HepG2 (cell line): ENCODE measurements at regions of chr10 and their contacts with region 1.

Region 1: GRCh38 chr10:115355162-115355760 is 262.1 kb downstream of the ATRNL1 start:
- DNase-seq: peak; percentile 63
- ATAC-seq: peak; percentile 87
- H3K4me3 ChIP-seq: no peak overlapping the region
- H3K27ac ChIP-seq: no peak overlapping the region
- H3K4me1 ChIP-seq: no peaks in the 10 kb centered on the region
- H3K27me3 ChIP-seq: no peaks in the 10 kb centered on the region
- CTCF ChIP-seq: peak; percentile 77
- EP300 ChIP-seq: no peak
- POLR2A ChIP-seq: no peak
- RAD21 ChIP-seq: no peak

Region 2: GRCh38 chr10:115321360-115321759 is 33.9 kb before region 1 on chr10:
- CTCF ChIA-PET with region 1: no interaction called
- POLR2A ChIA-PET with region 1: no interaction called
- in situ Hi-C with region 1: no loop called
- intact Hi-C with region 1: no loop called
- DNase-seq: no peak
- ATAC-seq: no peak
- H3K4me3 ChIP-seq: no peak overlapping the region
- H3K27ac ChIP-seq: no peak overlapping the region
- H3K4me1 ChIP-seq: no peaks in the 10 kb centered on the region
- H3K27me3 ChIP-seq: no peaks in the 10 kb centered on the region
- CTCF ChIP-seq: no peak
- EP300 ChIP-seq: no peak
- POLR2A ChIP-seq: no peak
- RAD21 ChIP-seq: no peak

Region 3: DNA sequence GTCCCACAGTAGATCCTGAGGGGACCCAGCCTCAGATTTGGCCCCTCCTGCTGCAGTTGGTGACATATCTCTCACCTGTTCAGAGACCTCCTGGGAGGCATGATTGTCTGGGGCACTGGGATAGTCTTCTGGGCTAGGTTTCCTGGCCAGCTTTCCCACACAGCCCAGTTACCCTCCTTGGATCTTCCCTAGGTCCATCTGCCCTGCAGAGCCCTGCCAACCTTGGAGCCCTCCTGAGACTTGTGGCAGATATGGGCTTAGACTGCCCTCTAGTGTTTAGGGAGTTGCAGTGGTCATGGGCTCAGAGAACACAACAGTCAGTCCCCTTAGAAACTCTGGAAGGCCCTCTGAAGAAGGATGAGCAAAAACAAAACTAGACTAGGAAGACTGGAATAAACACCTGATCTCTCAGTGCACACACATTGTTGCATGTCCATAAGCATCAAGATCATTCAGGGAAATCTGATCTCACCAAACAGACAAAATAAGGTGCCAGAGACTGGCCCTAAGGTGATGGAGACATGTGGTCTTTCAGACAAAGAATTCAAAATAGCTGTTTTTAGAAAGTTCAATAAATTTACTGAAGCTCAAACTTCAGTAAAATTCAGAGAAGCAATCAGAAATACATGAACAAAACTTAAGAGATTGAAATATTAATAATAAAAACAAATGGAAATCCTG is 62.5 kb after region 1 on chr10:
- CTCF ChIA-PET with region 1: interaction called, 23 read pairs
- POLR2A ChIA-PET with region 1: no interaction called
- in situ Hi-C with region 1: no loop called
- intact Hi-C with region 1: loop called (anchors 1 kb)
- DNase-seq: peak; percentile 60
- ATAC-seq: peak; percentile 99
- H3K4me3 ChIP-seq: no peak overlapping the region
- H3K27ac ChIP-seq: no peak overlapping the region
- H3K4me1 ChIP-seq: no peaks in the 10 kb centered on the region
- H3K27me3 ChIP-seq: no peaks in the 10 kb centered on the region
- CTCF ChIP-seq: peak; percentile 82
- EP300 ChIP-seq: no peak
- POLR2A ChIP-seq: no peak
- RAD21 ChIP-seq: no peak

Region 4: GRCh38 chr10:115572706-115573455 is 217.6 kb after region 1 on chr10:
- CTCF ChIA-PET with region 1: interaction called, 3 read pairs
- POLR2A ChIA-PET with region 1: no interaction called
- in situ Hi-C with region 1: no loop called
- intact Hi-C with region 1: loop called (anchors 2 kb)
- DNase-seq: no peak
- ATAC-seq: peak; percentile 73
- H3K4me3 ChIP-seq: no peak overlapping the region
- H3K27ac ChIP-seq: no peak overlapping the region
- H3K4me1 ChIP-seq: no peaks in the 10 kb centered on the region
- H3K27me3 ChIP-seq: no peaks in the 10 kb centered on the region
- CTCF ChIP-seq: peak; percentile 30; the same call in 1 of the 2 replicates
- EP300 ChIP-seq: no peak
- POLR2A ChIP-seq: no peak
- RAD21 ChIP-seq: no peak

Region 5: DNA sequence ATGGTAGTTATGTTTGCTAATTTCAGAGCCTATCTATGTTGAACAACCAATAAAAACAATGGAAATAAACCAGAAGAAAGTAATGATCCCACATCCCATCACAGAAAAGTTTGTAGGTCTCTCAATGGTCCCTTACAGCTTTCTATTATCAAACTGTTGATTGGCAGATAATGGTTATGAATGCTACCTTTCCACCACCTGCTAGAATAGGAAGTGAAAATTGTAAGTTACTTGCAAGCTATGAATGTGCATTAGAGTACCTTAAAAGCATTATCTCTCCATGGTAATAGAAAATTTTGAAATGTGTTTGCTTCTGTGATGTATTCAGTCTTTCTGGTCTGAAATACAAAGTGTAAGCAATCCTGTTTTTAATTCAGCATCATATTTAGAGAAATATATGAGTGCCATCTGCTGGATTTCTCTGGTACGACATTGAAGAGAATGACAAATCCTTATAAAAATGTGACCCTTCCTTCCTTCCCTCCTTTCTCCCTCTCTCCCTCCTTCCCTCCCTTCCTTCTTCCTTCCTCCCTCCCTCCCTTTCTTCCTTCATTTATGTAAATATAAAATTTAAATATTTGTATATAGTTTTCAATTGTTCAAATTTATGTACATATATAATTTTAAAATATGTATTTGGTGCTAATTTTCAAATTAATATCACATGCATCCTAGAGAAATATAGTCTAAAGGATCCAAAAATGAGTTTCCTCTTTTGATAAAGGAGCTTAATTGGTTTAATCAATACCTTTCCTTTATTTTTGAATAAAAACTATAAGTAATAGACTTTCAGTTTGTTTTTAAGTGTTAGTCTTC is 1030.9 kb after region 1 on chr10:
- CTCF ChIA-PET with region 1: interaction called, 14 read pairs
- POLR2A ChIA-PET with region 1: no interaction called
- in situ Hi-C with region 1: no loop called
- intact Hi-C with region 1: no loop called
- DNase-seq: peak; percentile 12
- ATAC-seq: no peak
- H3K4me3 ChIP-seq: no peak overlapping the region
- H3K27ac ChIP-seq: no peak overlapping the region
- H3K4me1 ChIP-seq: no peaks in the 10 kb centered on the region
- H3K27me3 ChIP-seq: no peaks in the 10 kb centered on the region
- CTCF ChIP-seq: peak; percentile 56
- EP300 ChIP-seq: no peak
- POLR2A ChIP-seq: no peak
- RAD21 ChIP-seq: no peak